PC-9 (cell line): ENCODE measurements at regions of chr17 and their contacts with region 1.

Region 1: GRCh38 chr17:19513897-19514488 is 19.7 kb upstream of the SLC47A1 start:
- DNase-seq: peak; percentile 58 to 75
- H3K4me3 ChIP-seq: no peak overlapping the region
- H3K27ac ChIP-seq: no peak overlapping the region
- H3K4me1 ChIP-seq: peaks cover 7% of the 10 kb centered on the region; the same call in 1 of the 2 replicates
- H3K27me3 ChIP-seq: no peaks in the 10 kb centered on the region
- CTCF ChIP-seq: peak; percentile 98

Region 2: DNA sequence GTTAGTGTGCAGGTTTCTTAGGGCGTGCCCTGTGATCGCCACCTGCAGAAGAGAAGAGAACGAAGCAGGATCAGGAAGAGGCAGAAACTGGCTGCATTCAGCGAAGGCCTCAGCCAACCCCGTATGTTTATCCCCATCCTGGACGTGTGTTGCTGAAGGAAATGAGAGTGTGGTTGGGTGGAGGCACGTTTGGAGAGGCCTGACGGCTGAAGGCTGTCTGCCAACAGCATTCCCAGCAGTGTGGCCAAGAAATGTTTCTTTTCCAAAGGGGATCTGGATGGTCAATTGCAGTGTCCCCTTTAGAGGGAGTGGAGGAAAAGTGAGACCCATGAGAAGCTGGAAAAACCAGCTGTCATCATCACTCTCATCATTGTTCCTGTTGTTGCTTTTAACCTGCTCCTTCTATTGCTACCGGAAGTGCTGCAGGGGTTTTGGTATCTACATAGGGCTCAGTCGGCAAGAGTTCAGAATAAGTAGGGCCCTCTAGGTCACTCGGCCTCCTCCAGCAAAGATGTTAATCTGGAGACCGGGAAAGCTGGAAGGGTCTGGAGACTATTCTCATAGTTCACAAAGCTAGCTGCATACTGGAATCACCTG is 26.9 kb before region 1 on chr17:
- CTCF ChIA-PET with region 1: no interaction called
- POLR2A ChIA-PET with region 1: no interaction called
- intact Hi-C with region 1: no loop called
- DNase-seq: no peak
- H3K4me3 ChIP-seq: no peak overlapping the region
- H3K27ac ChIP-seq: no peak overlapping the region
- H3K4me1 ChIP-seq: peaks cover 11% of the 10 kb centered on the region
- H3K27me3 ChIP-seq: no peaks in the 10 kb centered on the region
- CTCF ChIP-seq: no peak

Region 3: GRCh38 chr17:19648475-19649406 is 134.7 kb after region 1 on chr17 and contains the start of gene ALDH3A2:
- CTCF ChIA-PET with region 1: interaction called, 5 read pairs
- POLR2A ChIA-PET with region 1: no interaction called
- intact Hi-C with region 1: loop called (anchors 1 kb)
- DNase-seq: peak; percentile 93 to 99
- H3K4me3 ChIP-seq: peak within 1 kb of the TSS; percentile 92
- H3K27ac ChIP-seq: peak within 1 kb of the TSS; percentile 96
- H3K4me1 ChIP-seq: peaks cover 67% of the 10 kb centered on the region
- H3K27me3 ChIP-seq: no peaks in the 10 kb centered on the region
- CTCF ChIP-seq: no peak; the same call in 1 of the 2 replicates
- total RNA-seq, gene ALDH3A2: 271 and 290 TPM in 2 replicates

Region 4: DNA sequence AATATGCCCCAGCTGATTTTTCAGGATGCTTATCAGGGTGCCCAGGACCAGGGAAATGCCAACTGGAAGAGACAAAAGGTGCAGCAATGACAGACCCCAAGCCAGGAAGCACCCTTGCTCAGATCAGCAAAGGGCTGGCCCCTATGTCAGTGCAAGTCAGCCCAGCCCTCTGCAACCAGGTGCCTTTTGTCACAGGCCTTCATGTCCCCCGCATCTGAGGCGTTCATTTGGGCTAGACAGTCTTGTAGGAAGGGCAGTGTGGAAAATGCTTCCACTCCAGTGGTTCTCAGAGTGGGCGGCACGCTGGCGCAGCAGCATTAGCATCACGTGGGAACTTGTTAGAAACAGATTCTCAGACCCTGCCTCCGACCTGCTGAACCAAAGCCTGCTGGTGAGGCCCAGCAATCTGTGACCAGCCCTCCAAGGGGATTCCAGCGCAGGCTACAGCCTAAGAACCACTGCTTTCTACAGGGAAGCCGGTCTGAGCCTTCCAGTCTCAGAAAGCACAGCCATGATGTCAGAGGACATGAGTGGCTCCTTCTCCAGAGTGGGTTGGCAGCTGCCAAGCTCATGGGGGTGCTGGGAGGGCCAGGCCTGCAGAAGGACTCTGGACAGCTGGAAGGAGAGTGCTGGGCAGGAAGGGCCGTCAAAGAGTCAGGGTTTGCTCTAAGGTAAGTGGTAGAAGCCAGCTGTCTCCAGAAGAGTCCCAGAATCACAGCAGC is 189.3 kb after region 1 on chr17:
- CTCF ChIA-PET with region 1: no interaction called
- POLR2A ChIA-PET with region 1: no interaction called
- intact Hi-C with region 1: loop called (anchors 5 kb)
- DNase-seq: no peak
- H3K4me3 ChIP-seq: no peak overlapping the region
- H3K27ac ChIP-seq: no peak overlapping the region
- H3K4me1 ChIP-seq: peaks cover 13% of the 10 kb centered on the region; the same call in 1 of the 2 replicates
- H3K27me3 ChIP-seq: no peaks in the 10 kb centered on the region
- CTCF ChIP-seq: no peak

Region 5: GRCh38 chr17:19766422-19767270 is 252.7 kb after region 1 on chr17:
- CTCF ChIA-PET with region 1: interaction called, 5 read pairs
- POLR2A ChIA-PET with region 1: no interaction called
- intact Hi-C with region 1: loop called (anchors 1 kb)
- DNase-seq: peak in 1 of 2 experiments; percentile 85
- H3K4me3 ChIP-seq: no peak overlapping the region
- H3K27ac ChIP-seq: no peak overlapping the region
- H3K4me1 ChIP-seq: peaks cover 9% of the 10 kb centered on the region
- H3K27me3 ChIP-seq: no peaks in the 10 kb centered on the region
- CTCF ChIP-seq: peak; percentile 98

Region 6: GRCh38 chr17:20244671-20245070 is 730.7 kb after region 1 on chr17:
- CTCF ChIA-PET with region 1: interaction called, 14 read pairs
- POLR2A ChIA-PET with region 1: no interaction called
- intact Hi-C with region 1: no loop called
- DNase-seq: no peak
- H3K4me3 ChIP-seq: no peak overlapping the region
- H3K27ac ChIP-seq: no peak overlapping the region
- H3K4me1 ChIP-seq: no peaks in the 10 kb centered on the region
- H3K27me3 ChIP-seq: no peaks in the 10 kb centered on the region
- CTCF ChIP-seq: no peak